ENCODE measurements at regions of chr9 and their contacts with region 1.

Region 1: DNA sequence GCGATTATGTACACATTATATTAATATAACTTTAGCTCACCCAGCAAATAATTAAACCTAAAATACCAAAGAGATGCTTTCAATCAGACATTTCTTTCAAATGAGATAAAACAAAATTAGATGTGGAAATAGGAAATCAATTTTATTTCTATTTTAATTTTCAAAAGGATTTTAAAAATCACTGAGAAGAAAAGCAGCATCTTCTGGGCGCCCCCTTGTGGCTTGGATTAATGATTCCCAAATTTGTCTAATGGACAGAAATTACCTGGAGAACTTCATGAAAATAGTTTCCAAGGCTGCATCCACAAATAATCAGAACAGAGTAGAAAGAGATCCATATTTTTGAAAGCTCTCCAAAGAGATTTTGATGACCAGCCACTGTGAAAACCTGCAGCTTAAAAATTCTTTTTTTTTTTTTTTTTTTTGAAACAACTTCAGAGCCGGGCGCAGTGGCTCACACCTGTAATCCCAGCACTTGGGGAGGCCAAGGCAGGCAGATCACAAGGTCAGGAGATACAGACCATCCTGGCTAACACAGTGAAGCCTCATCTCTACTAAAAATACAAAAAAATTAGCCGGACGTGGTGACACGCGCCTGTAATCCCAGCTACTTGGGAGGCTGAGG is 50.9 kb upstream of the CEMIP2 start:
- DNase-seq: peak in 4 of 5 donors; percentile 47 to 56 (median 50)
- H3K4me3 ChIP-seq: no peak overlapping the region
- H3K4me3 Mint-ChIP-seq: no peak overlapping the region
- H3K27ac ChIP-seq: no peak overlapping the region
- H3K27ac Mint-ChIP-seq: no peak overlapping the region
- H3K4me1 ChIP-seq: no peaks in the 10 kb centered on the region
- H3K4me1 Mint-ChIP-seq: peaks cover 8 to 21% (median 13%) of the 10 kb centered on the region in 4 donors
- H3K27me3 ChIP-seq: no peaks in the 10 kb centered on the region
- H3K27me3 Mint-ChIP-seq: no peaks in the 10 kb centered on the region

Region 2: DNA sequence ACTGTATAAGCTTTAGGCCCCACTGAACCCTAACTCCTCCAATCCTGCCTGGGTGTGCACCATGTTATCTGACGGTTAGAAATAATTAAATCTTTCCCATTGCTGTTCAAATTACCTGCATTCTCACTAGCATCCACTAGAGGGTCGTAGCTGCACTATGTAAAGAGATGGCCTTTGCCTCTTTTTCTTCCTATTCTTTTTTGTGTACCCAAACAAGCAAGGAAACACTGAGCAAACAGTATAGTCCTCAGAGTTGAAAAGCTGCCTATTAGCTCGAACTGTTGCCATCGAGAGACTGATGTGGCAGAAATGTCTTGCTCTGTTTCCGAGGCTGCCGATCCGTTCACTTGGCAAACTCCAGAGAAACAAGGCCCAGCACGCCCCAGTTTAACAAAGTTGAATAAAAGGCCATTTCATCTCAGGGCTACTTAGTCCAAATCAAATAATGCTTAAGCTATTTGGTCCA is 534.0 kb before region 1 on chr9:
- CTCF ChIA-PET with region 1: interaction called, 18 read pairs
- POLR2A ChIA-PET with region 1: no interaction called
- intact Hi-C with region 1: loop called (anchors 5 kb)
- DNase-seq: peak; percentile 30 to 45 (median 36)
- H3K4me3 ChIP-seq: no peak overlapping the region
- H3K4me3 Mint-ChIP-seq: no peak overlapping the region
- H3K27ac ChIP-seq: no peak overlapping the region
- H3K27ac Mint-ChIP-seq: no peak overlapping the region
- H3K4me1 ChIP-seq: no peaks in the 10 kb centered on the region
- H3K4me1 Mint-ChIP-seq: no peaks in the 10 kb centered on the region
- H3K27me3 ChIP-seq: no peaks in the 10 kb centered on the region
- H3K27me3 Mint-ChIP-seq: peaks cover 0 to 5% of the 10 kb centered on the region in 2 donors

Region 3: DNA sequence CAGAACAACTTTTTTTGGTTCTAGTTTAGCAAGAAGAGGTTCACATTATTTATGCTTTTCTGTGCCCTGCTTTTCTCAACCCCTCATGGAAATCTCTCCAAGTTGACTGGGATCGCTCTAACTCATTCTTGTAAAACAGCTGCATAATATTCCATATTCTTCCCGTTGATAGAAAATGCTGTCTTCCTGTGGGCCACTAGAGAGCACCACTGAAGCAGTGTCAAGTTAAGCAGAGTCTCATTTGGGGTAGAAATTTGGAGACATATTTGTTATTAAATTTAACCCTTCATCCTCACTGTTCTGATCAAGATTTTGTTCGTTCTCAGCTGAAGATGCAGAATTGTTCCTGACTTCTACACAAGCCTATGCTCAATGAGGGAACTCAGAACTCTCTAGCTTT is 191.0 kb before region 1 on chr9:
- CTCF ChIA-PET with region 1: interaction called, 14 read pairs
- POLR2A ChIA-PET with region 1: no interaction called
- intact Hi-C with region 1: no loop called
- DNase-seq: peak in 4 of 5 donors; percentile 22 to 34 (median 25)
- H3K4me3 ChIP-seq: no peak overlapping the region
- H3K4me3 Mint-ChIP-seq: no peak overlapping the region
- H3K27ac ChIP-seq: no peak overlapping the region
- H3K27ac Mint-ChIP-seq: no peak overlapping the region
- H3K4me1 ChIP-seq: no peaks in the 10 kb centered on the region
- H3K4me1 Mint-ChIP-seq: peaks cover 0 to 2% (median 0%) of the 10 kb centered on the region in 4 donors
- H3K27me3 ChIP-seq: no peaks in the 10 kb centered on the region
- H3K27me3 Mint-ChIP-seq: no peaks in the 10 kb centered on the region

Region 4: GRCh38 chr9:71716138-71716909 is 102.9 kb before region 1 on chr9:
- CTCF ChIA-PET with region 1: interaction called, 12 read pairs
- POLR2A ChIA-PET with region 1: no interaction called
- intact Hi-C with region 1: no loop called
- DNase-seq: peak in 2 of 5 donors; percentile 17 to 24
- H3K4me3 ChIP-seq: no peak overlapping the region
- H3K4me3 Mint-ChIP-seq: no peak overlapping the region
- H3K27ac ChIP-seq: no peak overlapping the region
- H3K27ac Mint-ChIP-seq: peak overlapping the region in 4 of 7 donors; percentile 29 to 75 (median 74)
- H3K4me1 ChIP-seq: no peaks in the 10 kb centered on the region
- H3K4me1 Mint-ChIP-seq: peaks cover 0 to 15% (median 9%) of the 10 kb centered on the region in 4 donors
- H3K27me3 ChIP-seq: no peaks in the 10 kb centered on the region
- H3K27me3 Mint-ChIP-seq: no peaks in the 10 kb centered on the region

Region 5: GRCh38 chr9:71783120-71783530 is 36.1 kb before region 1 on chr9:
- CTCF ChIA-PET with region 1: interaction called, 218 read pairs
- POLR2A ChIA-PET with region 1: interaction called, 33 read pairs
- intact Hi-C with region 1: loop called (anchors 1 kb)
- DNase-seq: peak; percentile 86 to 95 (median 90)
- H3K4me3 ChIP-seq: no peak overlapping the region
- H3K4me3 Mint-ChIP-seq: peak overlapping the region; percentile 64 to 86 (median 82)
- H3K27ac ChIP-seq: peak overlapping the region; percentile 83
- H3K27ac Mint-ChIP-seq: peak overlapping the region; percentile 93 to 100 (median 99)
- H3K4me1 ChIP-seq: peaks cover 41% of the 10 kb centered on the region
- H3K4me1 Mint-ChIP-seq: peaks cover 36 to 51% (median 40%) of the 10 kb centered on the region in 4 donors
- H3K27me3 ChIP-seq: no peaks in the 10 kb centered on the region
- H3K27me3 Mint-ChIP-seq: no peaks in the 10 kb centered on the region

Region 6: DNA sequence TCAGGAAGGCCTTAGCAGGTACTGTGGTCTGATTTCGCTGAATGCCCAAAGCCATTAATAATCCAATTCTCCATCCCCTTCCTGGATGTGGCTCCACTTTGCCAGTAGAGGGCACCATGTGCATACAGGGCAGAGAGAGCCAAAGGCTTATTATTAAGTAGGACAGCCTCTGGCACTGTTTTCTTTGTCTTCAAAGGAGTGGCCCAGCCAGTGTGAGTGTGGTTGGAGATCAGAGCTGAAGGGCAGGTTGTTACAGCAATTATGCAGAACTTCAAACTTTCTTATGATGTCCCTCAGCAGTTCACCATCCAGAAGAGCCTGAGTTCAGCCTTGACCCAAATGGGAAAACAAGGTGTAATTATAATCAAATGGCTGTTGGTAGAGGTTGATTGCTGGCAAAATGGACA is 12.3 kb before region 1 on chr9:
- CTCF ChIA-PET with region 1: interaction called, 206 read pairs
- POLR2A ChIA-PET with region 1: interaction called, 20 read pairs
- intact Hi-C with region 1: loop called (anchors 1 kb)
- DNase-seq: peak; percentile 60 to 64 (median 63)
- H3K4me3 ChIP-seq: no peak overlapping the region
- H3K4me3 Mint-ChIP-seq: peak overlapping the region in 2 of 8 donors; percentile 18 to 32
- H3K27ac ChIP-seq: no peak overlapping the region
- H3K27ac Mint-ChIP-seq: peak overlapping the region in 6 of 7 donors; percentile 2 to 93 (median 54)
- H3K4me1 ChIP-seq: peaks cover 7% of the 10 kb centered on the region
- H3K4me1 Mint-ChIP-seq: peaks cover 5 to 7% (median 6%) of the 10 kb centered on the region in 4 donors
- H3K27me3 ChIP-seq: no peaks in the 10 kb centered on the region
- H3K27me3 Mint-ChIP-seq: no peaks in the 10 kb centered on the region

Region 7: GRCh38 chr9:72022841-72023240 is 203.6 kb after region 1 on chr9:
- CTCF ChIA-PET with region 1: interaction called, 21 read pairs
- POLR2A ChIA-PET with region 1: interaction called, 3 read pairs
- intact Hi-C with region 1: no loop called
- DNase-seq: no peak
- H3K4me3 ChIP-seq: no peak overlapping the region
- H3K4me3 Mint-ChIP-seq: no peak overlapping the region
- H3K27ac ChIP-seq: no peak overlapping the region
- H3K27ac Mint-ChIP-seq: peak overlapping the region in 1 of 7 donors; percentile 27
- H3K4me1 ChIP-seq: no peaks in the 10 kb centered on the region
- H3K4me1 Mint-ChIP-seq: no peaks in the 10 kb centered on the region
- H3K27me3 ChIP-seq: no peaks in the 10 kb centered on the region
- H3K27me3 Mint-ChIP-seq: peaks cover 0 to 2% of the 10 kb centered on the region in 2 donors

Region 8: DNA sequence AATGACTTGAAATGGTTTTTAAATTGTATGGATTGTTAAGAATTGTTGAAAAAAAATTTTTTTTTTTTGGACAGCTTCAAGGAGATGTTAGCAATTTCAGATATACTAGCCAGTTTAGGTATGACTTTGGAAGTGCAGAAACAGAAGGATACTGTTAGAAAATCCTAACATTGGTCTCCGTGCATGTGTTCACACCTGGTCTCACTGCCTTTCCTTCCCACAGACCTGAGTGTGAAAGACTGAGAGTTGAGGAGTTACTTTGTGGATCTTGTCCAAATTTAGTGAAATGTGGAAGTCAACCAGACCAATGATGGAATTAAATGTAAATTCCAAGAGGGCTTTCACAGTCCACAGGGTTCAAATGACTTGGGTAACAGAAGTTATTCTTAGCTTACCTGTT is 432.4 kb after region 1 on chr9:
- CTCF ChIA-PET with region 1: no interaction called
- POLR2A ChIA-PET with region 1: no interaction called
- intact Hi-C with region 1: no loop called
- DNase-seq: no peak
- H3K4me3 ChIP-seq: no peak overlapping the region
- H3K4me3 Mint-ChIP-seq: no peak overlapping the region
- H3K27ac ChIP-seq: no peak overlapping the region
- H3K27ac Mint-ChIP-seq: no peak overlapping the region
- H3K4me1 ChIP-seq: no peaks in the 10 kb centered on the region
- H3K4me1 Mint-ChIP-seq: no peaks in the 10 kb centered on the region
- H3K27me3 ChIP-seq: peaks cover 3% of the 10 kb centered on the region
- H3K27me3 Mint-ChIP-seq: peaks cover 15 to 33% of the 10 kb centered on the region in 2 donors

Region 9: DNA sequence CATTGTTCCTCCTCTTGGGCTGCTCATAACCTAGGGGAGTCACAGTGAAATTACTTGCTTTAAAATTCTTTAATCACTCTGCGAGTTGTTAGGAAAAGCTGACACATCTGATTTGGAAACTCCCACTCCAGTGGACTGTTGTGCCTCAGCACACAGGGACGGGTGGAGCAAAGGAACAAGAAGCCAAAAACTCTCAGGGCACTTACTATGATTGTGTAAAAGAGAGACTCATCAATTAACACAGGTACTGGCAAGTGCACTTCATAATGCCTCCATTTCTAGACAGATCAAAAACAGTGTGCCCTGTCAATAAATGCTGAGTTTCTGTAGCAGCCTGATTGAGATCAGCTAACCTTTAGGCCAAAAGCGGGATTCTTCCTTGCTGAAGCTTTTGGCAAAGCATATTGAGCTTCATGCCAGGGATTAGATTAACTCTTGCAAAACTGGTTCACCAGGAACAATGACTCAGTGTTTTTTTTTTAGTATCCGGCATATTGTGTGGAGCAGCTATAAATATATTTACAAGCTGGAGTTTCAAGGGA is 758.1 kb after region 1 on chr9:
- CTCF ChIA-PET with region 1: no interaction called
- POLR2A ChIA-PET with region 1: no interaction called
- intact Hi-C with region 1: no loop called
- DNase-seq: no peak
- H3K4me3 ChIP-seq: no peak overlapping the region
- H3K4me3 Mint-ChIP-seq: no peak overlapping the region
- H3K27ac ChIP-seq: no peak overlapping the region
- H3K27ac Mint-ChIP-seq: peak overlapping the region in 1 of 7 donors; percentile 50
- H3K4me1 ChIP-seq: no peaks in the 10 kb centered on the region
- H3K4me1 Mint-ChIP-seq: peaks cover 0 to 7% (median 4%) of the 10 kb centered on the region in 4 donors
- H3K27me3 ChIP-seq: no peaks in the 10 kb centered on the region
- H3K27me3 Mint-ChIP-seq: no peaks in the 10 kb centered on the region